Tibial artery (tissue), 4 donors: ENCODE measurements at regions of chr3 and their contacts with region 1.

Region 1: GRCh38 chr3:188978421-188979171 is 193.2 kb upstream of the TPRG1 start:
- DNase-seq: peak in 1 of 2 donors; percentile 33
- H3K4me3 ChIP-seq: no peak overlapping the region
- H3K27ac ChIP-seq: peak overlapping the region in 1 of 2 donors; percentile 23
- H3K4me1 ChIP-seq: peaks cover 0 to 27% (median 13%) of the 10 kb centered on the region in 4 donors
- H3K27me3 ChIP-seq: no peaks in the 10 kb centered on the region
- CTCF ChIP-seq: no peak

Region 2: DNA sequence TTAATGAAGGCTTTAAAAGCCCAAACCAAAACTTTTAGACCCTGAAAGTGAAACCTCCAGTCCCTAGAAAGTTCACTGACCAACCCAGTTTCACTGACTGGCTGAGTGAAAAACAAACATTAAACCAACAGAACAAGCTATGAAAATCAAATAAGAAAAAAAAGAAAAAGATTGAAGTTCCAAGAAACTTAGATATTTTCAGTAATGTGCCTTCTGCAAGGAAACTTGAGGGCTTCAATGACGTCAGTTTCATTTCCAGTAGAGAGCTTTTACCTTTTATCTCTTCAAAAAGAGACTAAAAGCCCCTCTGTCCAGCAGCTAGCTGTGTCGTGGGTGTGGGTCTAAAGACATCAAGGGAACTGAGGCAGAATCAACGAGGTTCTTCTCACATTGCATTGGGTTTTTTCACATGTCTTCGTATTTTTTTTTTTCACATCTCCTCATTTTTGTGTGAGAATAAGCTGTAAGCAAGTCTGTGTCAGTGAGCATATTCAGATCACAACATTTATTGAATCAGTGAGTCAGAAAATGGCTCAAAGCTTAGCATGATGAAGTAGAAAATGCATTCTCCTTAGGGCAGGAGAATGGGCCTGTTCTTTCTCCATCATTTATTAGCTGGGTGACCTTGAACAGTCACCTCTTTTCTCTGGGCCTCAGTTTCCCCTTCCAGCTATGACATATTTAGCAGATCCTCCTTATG is 1178.5 kb before region 1 on chr3:
- intact Hi-C with region 1: loop called (anchors 10 kb)
- DNase-seq: no peak
- H3K4me3 ChIP-seq: no peak overlapping the region
- H3K27ac ChIP-seq: no peak overlapping the region
- H3K4me1 ChIP-seq: peaks cover 0 to 7% (median 0%) of the 10 kb centered on the region in 4 donors
- H3K27me3 ChIP-seq: no peaks in the 10 kb centered on the region
- CTCF ChIP-seq: no peak